IMR-90 (cell line): ENCODE measurements at regions of chrX and their contacts with region 1.

Region 1: GRCh38 chrX:67480787-67481186 is 63.0 kb upstream of the AR start:
- DNase-seq: no peak
- ATAC-seq: no peak
- H3K4me3 ChIP-seq: no peak overlapping the region
- H3K27ac ChIP-seq: no peak overlapping the region
- H3K4me1 ChIP-seq: no peaks in the 10 kb centered on the region
- H3K27me3 ChIP-seq: no peaks in the 10 kb centered on the region
- CTCF ChIP-seq: no peak
- POLR2A ChIP-seq: no peak
- RAD21 ChIP-seq: no peak

Region 2: DNA sequence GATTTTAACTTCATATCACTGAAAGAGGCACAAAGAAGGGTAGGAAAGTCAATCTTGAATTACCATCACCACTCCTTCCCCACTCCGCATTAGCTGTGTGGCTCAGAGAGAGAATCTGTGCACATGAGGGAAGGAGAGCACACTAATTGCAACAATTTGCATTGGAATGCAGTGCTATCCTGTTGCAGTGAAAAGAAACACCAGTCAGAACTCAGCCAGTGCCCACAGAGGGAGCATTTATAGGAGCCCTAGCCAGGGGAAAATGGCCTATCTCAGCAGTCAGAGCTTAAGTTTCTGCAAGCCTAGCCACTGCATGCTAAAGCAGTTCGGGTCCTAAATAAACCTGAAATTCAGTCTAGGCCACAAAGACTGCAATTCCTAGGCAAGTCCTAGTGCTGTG is 96.4 kb before region 1 on chrX:
- CTCF ChIA-PET with region 1: no interaction called
- POLR2A ChIA-PET with region 1: no interaction called
- dilution Hi-C with region 1: no loop called
- in situ Hi-C with region 1: loop called (anchors 25 kb)
- intact Hi-C with region 1: no loop called
- DNase-seq: no peak
- ATAC-seq: no peak
- H3K4me3 ChIP-seq: no peak overlapping the region
- H3K27ac ChIP-seq: no peak overlapping the region
- H3K4me1 ChIP-seq: no peaks in the 10 kb centered on the region
- H3K27me3 ChIP-seq: no peaks in the 10 kb centered on the region
- CTCF ChIP-seq: no peak
- POLR2A ChIP-seq: no peak
- RAD21 ChIP-seq: no peak

Region 3: GRCh38 chrX:67415937-67416336 is 64.8 kb before region 1 on chrX:
- CTCF ChIA-PET with region 1: no interaction called
- POLR2A ChIA-PET with region 1: no interaction called
- dilution Hi-C with region 1: no loop called
- in situ Hi-C with region 1: no loop called
- intact Hi-C with region 1: no loop called
- DNase-seq: no peak
- ATAC-seq: no peak
- H3K4me3 ChIP-seq: no peak overlapping the region
- H3K27ac ChIP-seq: no peak overlapping the region
- H3K4me1 ChIP-seq: no peaks in the 10 kb centered on the region
- H3K27me3 ChIP-seq: no peaks in the 10 kb centered on the region
- CTCF ChIP-seq: no peak
- POLR2A ChIP-seq: no peak
- RAD21 ChIP-seq: no peak

Region 4: DNA sequence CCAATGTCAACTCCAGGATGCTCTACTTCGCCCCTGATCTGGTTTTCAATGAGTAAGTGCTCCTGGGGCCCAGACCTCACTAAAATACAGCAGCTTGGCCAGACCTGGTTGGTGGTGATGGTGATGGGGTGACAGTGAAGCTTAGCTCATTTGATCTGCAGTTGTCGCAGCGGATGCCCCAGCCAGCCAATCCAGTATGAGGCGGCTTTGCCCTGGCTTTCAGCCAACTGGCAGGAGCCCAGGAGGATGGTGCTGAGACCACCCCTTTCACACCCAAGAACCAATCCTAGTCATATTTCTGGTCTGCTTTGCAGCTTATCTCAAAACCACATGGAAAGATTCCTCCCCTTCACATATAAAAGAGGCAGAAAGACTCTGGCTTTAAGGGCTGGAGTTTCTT is 236.8 kb after region 1 on chrX:
- CTCF ChIA-PET with region 1: no interaction called
- POLR2A ChIA-PET with region 1: no interaction called
- dilution Hi-C with region 1: no loop called
- in situ Hi-C with region 1: no loop called
- intact Hi-C with region 1: no loop called
- DNase-seq: no peak
- ATAC-seq: no peak
- H3K4me3 ChIP-seq: no peak overlapping the region
- H3K27ac ChIP-seq: no peak overlapping the region
- H3K4me1 ChIP-seq: no peaks in the 10 kb centered on the region
- H3K27me3 ChIP-seq: no peaks in the 10 kb centered on the region
- CTCF ChIP-seq: no peak
- POLR2A ChIP-seq: no peak
- RAD21 ChIP-seq: no peak